CD8-positive, alpha-beta memory T cell (primary cell): ENCODE measurements at regions of chr16 and their contacts with region 1.

Region 1: DNA sequence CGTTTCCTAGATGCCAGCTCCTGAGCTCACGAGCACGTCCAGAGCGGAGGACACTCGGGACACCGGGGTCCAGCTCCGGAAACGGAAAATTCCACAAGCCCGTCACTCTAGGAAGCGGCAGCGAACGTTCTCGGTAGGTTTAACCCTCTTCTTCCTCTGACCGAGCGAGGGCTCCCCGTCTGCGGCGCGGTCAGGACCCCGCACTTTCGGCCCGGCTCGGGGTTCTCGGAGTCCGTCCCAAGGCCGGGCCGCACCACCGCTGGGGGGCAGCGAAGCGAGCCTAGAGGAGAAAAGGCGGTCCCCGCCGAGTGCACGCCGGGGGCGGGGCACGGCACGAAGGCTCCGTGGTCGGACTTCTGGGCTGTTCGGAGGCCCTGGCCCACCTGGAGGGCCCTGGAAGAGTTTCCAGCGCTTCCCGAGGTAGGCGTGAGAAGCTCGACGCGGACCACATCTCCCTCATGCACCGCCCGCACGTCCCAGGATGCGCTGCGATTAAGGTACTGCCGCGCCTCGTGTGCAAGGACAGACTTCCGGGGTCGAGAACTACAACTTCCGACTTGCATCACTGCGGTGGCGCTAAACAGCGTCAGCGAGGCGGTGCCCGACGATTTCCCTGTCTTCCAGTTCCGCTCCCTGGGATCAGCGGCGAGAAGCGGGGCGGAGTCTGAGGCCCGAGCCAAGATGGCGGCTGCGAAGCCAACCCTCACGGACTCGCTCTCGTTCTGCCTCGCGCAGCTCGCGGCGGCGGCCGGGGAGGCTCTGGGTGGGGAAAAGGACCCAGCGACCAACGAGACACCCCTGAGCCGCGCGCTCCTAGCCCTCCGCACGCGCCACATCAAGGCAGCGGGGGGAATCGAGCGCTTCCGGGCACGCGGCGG is at the start of gene ARMC5:
- DNase-seq: peak; percentile 95 to 98 (median 98)
- H3K4me3 ChIP-seq: peak within 1 kb of the TSS; percentile 79
- H3K4me3 Mint-ChIP-seq: peak within 1 kb of the TSS; percentile 91 to 97 (median 94)
- H3K27ac ChIP-seq: peak within 1 kb of the TSS; percentile 97
- H3K27ac Mint-ChIP-seq: peak within 1 kb of the TSS; percentile 95 to 99 (median 98)
- H3K4me1 ChIP-seq: peaks cover 47% of the 10 kb centered on the region
- H3K4me1 Mint-ChIP-seq: peaks cover 43 to 53% (median 48%) of the 10 kb centered on the region in 3 donors
- H3K27me3 ChIP-seq: no peaks in the 10 kb centered on the region
- H3K27me3 Mint-ChIP-seq: no peaks in the 10 kb centered on the region
- total RNA-seq, gene ARMC5: 14.3 to 15.9 TPM

Region 2: GRCh38 chr16:31117391-31118197 is 341.5 kb before region 1 on chr16 and contains the start of gene KAT8:
- CTCF ChIA-PET with region 1: interaction called, 5 read pairs
- POLR2A ChIA-PET with region 1: interaction called, 14 read pairs
- DNase-seq: peak; percentile 96 to 98 (median 97)
- H3K4me3 ChIP-seq: peak within 1 kb of the TSS; percentile 90
- H3K4me3 Mint-ChIP-seq: peak within 1 kb of the TSS; percentile 83 to 95 (median 89)
- H3K27ac ChIP-seq: peak within 1 kb of the TSS; percentile 90
- H3K27ac Mint-ChIP-seq: peak within 1 kb of the TSS; percentile 76 to 99 (median 96)
- H3K4me1 ChIP-seq: peaks cover 12% of the 10 kb centered on the region
- H3K4me1 Mint-ChIP-seq: peaks cover 13 to 18% (median 16%) of the 10 kb centered on the region in 3 donors
- H3K27me3 ChIP-seq: no peaks in the 10 kb centered on the region
- H3K27me3 Mint-ChIP-seq: no peaks in the 10 kb centered on the region
- total RNA-seq, gene KAT8: 56.1 to 58.6 TPM

Region 3: GRCh38 chr16:31440516-31441184 is 18.4 kb before region 1 on chr16:
- CTCF ChIA-PET with region 1: interaction called, 24 read pairs
- POLR2A ChIA-PET with region 1: interaction called, 4 read pairs
- DNase-seq: no peak
- H3K4me3 ChIP-seq: no peak overlapping the region
- H3K4me3 Mint-ChIP-seq: peak overlapping the region in 3 of 7 donors; percentile 34 to 84 (median 40)
- H3K27ac ChIP-seq: no peak overlapping the region
- H3K27ac Mint-ChIP-seq: peak overlapping the region in 1 of 8 donors; percentile 2
- H3K4me1 ChIP-seq: no peaks in the 10 kb centered on the region
- H3K4me1 Mint-ChIP-seq: peaks cover 12 to 19% (median 18%) of the 10 kb centered on the region in 3 donors
- H3K27me3 ChIP-seq: no peaks in the 10 kb centered on the region
- H3K27me3 Mint-ChIP-seq: peaks cover 0 to 3% of the 10 kb centered on the region in 2 donors

Region 4: GRCh38 chr16:31476303-31477219 is 17.5 kb after region 1 on chr16:
- CTCF ChIA-PET with region 1: interaction called, 23 read pairs
- POLR2A ChIA-PET with region 1: interaction called, 11 read pairs
- DNase-seq: peak; percentile 72 to 91 (median 82)
- H3K4me3 ChIP-seq: peak overlapping the region; percentile 70
- H3K4me3 Mint-ChIP-seq: peak overlapping the region; percentile 63 to 94 (median 88)
- H3K27ac ChIP-seq: peak overlapping the region; percentile 51
- H3K27ac Mint-ChIP-seq: peak overlapping the region in 5 of 8 donors; percentile 37 to 78 (median 63)
- H3K4me1 ChIP-seq: peaks cover 6% of the 10 kb centered on the region
- H3K4me1 Mint-ChIP-seq: peaks cover 6 to 29% (median 17%) of the 10 kb centered on the region in 3 donors
- H3K27me3 ChIP-seq: peaks cover 9% of the 10 kb centered on the region
- H3K27me3 Mint-ChIP-seq: peaks cover 13 to 21% of the 10 kb centered on the region in 2 donors

Region 5: DNA sequence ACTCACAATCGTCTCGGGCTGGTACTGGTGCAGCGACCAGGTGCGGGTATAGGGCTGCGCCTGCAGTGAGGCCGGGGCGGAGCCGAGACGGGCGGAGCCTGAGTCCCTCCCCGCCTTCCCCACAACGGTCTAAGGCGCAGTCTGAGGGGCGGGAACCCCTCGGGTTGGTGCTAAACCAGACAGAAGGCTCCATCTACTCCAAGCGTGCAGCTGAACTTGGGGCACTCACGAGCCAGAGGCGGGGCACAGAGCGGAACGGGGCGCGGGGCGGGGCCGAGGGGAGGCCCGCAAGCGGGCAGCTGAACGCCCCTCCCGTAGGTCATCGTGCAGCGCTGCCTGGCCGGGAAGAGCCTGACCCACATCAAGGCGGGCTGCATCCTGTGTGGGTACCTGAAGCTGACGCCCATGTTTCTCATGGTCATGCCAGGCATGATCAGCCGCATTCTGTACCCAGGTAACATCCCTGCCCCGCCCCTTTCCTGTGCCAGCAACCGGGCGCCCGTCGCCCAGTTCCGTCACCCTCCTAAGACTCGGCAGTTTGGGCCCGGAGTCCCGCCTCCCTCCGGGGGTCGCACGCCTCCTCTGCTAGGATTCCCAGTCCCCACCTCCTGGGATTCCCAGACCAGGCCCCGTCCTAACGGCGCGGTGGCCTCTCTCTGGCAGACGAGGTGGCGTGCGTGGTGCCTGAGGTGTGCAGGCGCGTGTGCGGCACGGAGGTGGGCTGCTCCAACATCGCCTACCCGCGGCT is 28.8 kb after region 1 on chr16:
- CTCF ChIA-PET with region 1: interaction called, 10 read pairs
- POLR2A ChIA-PET with region 1: interaction called, 9 read pairs
- DNase-seq: peak; percentile 70 to 83 (median 78)
- H3K4me3 ChIP-seq: peak overlapping the region; percentile 87
- H3K4me3 Mint-ChIP-seq: peak overlapping the region; percentile 90 to 93 (median 91)
- H3K27ac ChIP-seq: peak overlapping the region; percentile 24
- H3K27ac Mint-ChIP-seq: peak overlapping the region; percentile 64 to 95 (median 84)
- H3K4me1 ChIP-seq: peaks cover 14% of the 10 kb centered on the region
- H3K4me1 Mint-ChIP-seq: peaks cover 4 to 17% (median 13%) of the 10 kb centered on the region in 3 donors
- H3K27me3 ChIP-seq: no peaks in the 10 kb centered on the region
- H3K27me3 Mint-ChIP-seq: no peaks in the 10 kb centered on the region

Region 6: DNA sequence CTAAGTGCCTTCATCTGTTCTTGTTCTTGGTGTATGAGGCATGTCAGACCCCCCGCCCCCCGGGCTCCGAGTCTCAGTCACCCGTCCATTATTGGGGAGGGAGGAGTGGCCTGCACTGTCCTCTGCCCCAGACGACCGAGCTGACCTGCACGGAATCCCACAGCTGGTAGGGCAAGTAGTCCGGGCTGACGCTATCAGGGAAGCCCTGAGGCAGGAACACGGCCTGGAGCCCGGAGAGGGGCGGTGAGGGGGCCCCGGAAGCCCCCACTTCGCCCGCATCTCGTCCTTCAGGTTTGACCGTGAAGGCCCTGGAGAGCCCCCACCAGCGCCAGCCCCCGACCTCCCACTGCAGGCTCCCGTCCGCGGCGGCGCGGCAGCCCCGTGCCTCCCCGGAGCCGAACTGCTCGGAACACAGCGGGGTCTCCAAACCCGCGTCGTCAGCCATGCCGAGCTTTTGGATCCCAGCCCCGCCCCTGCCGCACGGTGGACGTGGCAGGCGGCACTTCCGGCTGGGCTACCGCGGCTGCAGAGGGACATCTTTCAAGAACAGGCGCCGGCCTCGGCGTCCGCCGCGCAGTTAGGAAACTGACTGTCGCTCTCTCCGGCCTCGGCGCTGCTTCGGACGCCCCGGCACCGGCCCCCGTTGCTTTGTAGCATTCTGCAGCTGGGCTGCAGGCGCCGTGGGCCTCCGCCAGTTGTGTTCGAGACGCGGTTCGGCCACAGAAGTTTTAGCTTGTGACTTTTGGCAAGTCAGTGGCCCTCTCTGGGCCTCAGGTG is 49.0 kb after region 1 on chr16 and contains the start of gene RUSF1:
- CTCF ChIA-PET with region 1: interaction called, 6 read pairs
- POLR2A ChIA-PET with region 1: interaction called, 15 read pairs
- DNase-seq: peak; percentile 69 to 86 (median 74)
- H3K4me3 ChIP-seq: peak within 1 kb of the TSS; percentile 61
- H3K4me3 Mint-ChIP-seq: peak within 1 kb of the TSS; percentile 88 to 97 (median 93)
- H3K27ac ChIP-seq: peak within 1 kb of the TSS; percentile 91
- H3K27ac Mint-ChIP-seq: peak within 1 kb of the TSS; percentile 94 to 99 (median 96)
- H3K4me1 ChIP-seq: peaks cover 30% of the 10 kb centered on the region
- H3K4me1 Mint-ChIP-seq: peaks cover 35 to 62% (median 50%) of the 10 kb centered on the region in 3 donors
- H3K27me3 ChIP-seq: no peaks in the 10 kb centered on the region
- H3K27me3 Mint-ChIP-seq: no peaks in the 10 kb centered on the region
- total RNA-seq, gene RUSF1: 44.4 to 46.1 TPM

Region 7: GRCh38 chr16:31542763-31543162 is 83.7 kb after region 1 on chr16:
- CTCF ChIA-PET with region 1: no interaction called
- POLR2A ChIA-PET with region 1: no interaction called
- DNase-seq: no peak
- H3K4me3 ChIP-seq: no peak overlapping the region
- H3K4me3 Mint-ChIP-seq: no peak overlapping the region
- H3K27ac ChIP-seq: no peak overlapping the region
- H3K27ac Mint-ChIP-seq: no peak overlapping the region
- H3K4me1 ChIP-seq: no peaks in the 10 kb centered on the region
- H3K4me1 Mint-ChIP-seq: peaks cover 0 to 4% (median 2%) of the 10 kb centered on the region in 3 donors
- H3K27me3 ChIP-seq: peaks cover 7% of the 10 kb centered on the region
- H3K27me3 Mint-ChIP-seq: peaks cover 29 to 62% of the 10 kb centered on the region in 2 donors

Region 8: GRCh38 chr16:31868691-31869167 is 409.6 kb after region 1 on chr16:
- CTCF ChIA-PET with region 1: interaction called, 26 read pairs
- POLR2A ChIA-PET with region 1: interaction called, 3 read pairs
- DNase-seq: peak; percentile 67 to 82 (median 75)
- H3K4me3 ChIP-seq: peak overlapping the region; percentile 32
- H3K4me3 Mint-ChIP-seq: peak overlapping the region; percentile 55 to 82 (median 68)
- H3K27ac ChIP-seq: no peak overlapping the region
- H3K27ac Mint-ChIP-seq: peak overlapping the region; percentile 57 to 97 (median 86)
- H3K4me1 ChIP-seq: peaks cover 36% of the 10 kb centered on the region
- H3K4me1 Mint-ChIP-seq: peaks cover 45 to 56% (median 55%) of the 10 kb centered on the region in 3 donors
- H3K27me3 ChIP-seq: no peaks in the 10 kb centered on the region
- H3K27me3 Mint-ChIP-seq: no peaks in the 10 kb centered on the region